GM12878 (cell line): ENCODE measurements at regions of chr3 and their contacts with region 1.

Region 1: GRCh38 chr3:195271116-195271858 is at the start of gene XXYLT1:
- DNase-seq: no peak
- ATAC-seq: peak; percentile 95
- H3K4me3 ChIP-seq: peak within 1 kb of the TSS; percentile 85
- H3K27ac ChIP-seq: peak within 1 kb of the TSS; percentile 64
- H3K4me1 ChIP-seq: peaks cover 10% of the 10 kb centered on the region; the same call in 1 of the 2 replicates
- H3K27me3 ChIP-seq: no peaks in the 10 kb centered on the region
- CTCF ChIP-seq: peak; percentile 84 to 99 (median 91); a peak in 5 of 6 replicates
- EP300 ChIP-seq: no peak
- POLR2A ChIP-seq: no peak; the same call in 1 of the 2 replicates
- RAD21 ChIP-seq: peak; percentile 82
- polyA plus RNA-seq, gene XXYLT1: 1.2 to 3.2 TPM

Region 2: GRCh38 chr3:194682694-194683310 is 588.5 kb before region 1 on chr3:
- CTCF ChIA-PET with region 1: interaction called, 30 read pairs
- POLR2A ChIA-PET with region 1: no interaction called
- RAD21 ChIA-PET with region 1: interaction called, 32 read pairs
- SMC1A ChIA-PET with region 1: interaction called, 31 read pairs
- in situ Hi-C with region 1: no loop called
- intact Hi-C with region 1: no loop called
- DNase-seq: no peak
- ATAC-seq: peak; percentile 86
- H3K4me3 ChIP-seq: no peak overlapping the region
- H3K27ac ChIP-seq: no peak overlapping the region
- H3K4me1 ChIP-seq: peaks cover 36% of the 10 kb centered on the region
- H3K27me3 ChIP-seq: peaks cover 0 to 5% of the 10 kb centered on the region in 2 experiments; a peak in 2 of 4 replicates
- CTCF ChIP-seq: peak; percentile 88 to 97 (median 94); a peak in 5 of 6 replicates
- EP300 ChIP-seq: no peak
- POLR2A ChIP-seq: no peak
- RAD21 ChIP-seq: peak; percentile 95

Region 3: GRCh38 chr3:195286115-195286872 is 15.0 kb after region 1 on chr3:
- CTCF ChIA-PET with region 1: interaction called, 18 read pairs
- POLR2A ChIA-PET with region 1: interaction called, 7 read pairs
- RAD21 ChIA-PET with region 1: interaction called, 6 read pairs
- SMC1A ChIA-PET with region 1: interaction called, 3 read pairs
- in situ Hi-C with region 1: no loop called
- intact Hi-C with region 1: no loop called
- DNase-seq: no peak
- ATAC-seq: no peak
- H3K4me3 ChIP-seq: no peak overlapping the region
- H3K27ac ChIP-seq: no peak overlapping the region
- H3K4me1 ChIP-seq: no peaks in the 10 kb centered on the region
- H3K27me3 ChIP-seq: no peaks in the 10 kb centered on the region
- CTCF ChIP-seq: no peak
- EP300 ChIP-seq: no peak
- POLR2A ChIP-seq: no peak
- RAD21 ChIP-seq: no peak

Region 4: DNA sequence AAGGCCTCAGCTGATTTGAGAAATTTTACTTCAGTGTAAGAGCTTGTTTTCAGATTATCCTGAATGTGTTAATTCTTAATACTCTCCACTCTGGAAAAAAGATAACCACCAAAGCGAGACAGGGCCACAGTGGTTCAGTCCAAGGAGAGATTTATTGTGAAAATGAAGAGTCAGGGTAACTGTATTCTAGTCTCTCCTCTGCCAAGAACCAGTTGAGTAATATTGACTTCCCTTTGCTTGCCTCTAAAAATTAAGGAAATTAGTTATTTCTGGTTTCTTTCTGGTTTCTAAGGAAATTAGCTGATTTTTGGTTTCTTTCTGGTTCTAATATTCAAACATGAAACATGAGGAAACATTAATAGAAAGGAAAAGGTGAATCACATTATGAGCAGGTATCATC is 236.9 kb after region 1 on chr3:
- CTCF ChIA-PET with region 1: interaction called, 37 read pairs
- POLR2A ChIA-PET with region 1: no interaction called
- RAD21 ChIA-PET with region 1: interaction called, 10 read pairs
- SMC1A ChIA-PET with region 1: interaction called, 9 read pairs
- in situ Hi-C with region 1: no loop called
- intact Hi-C with region 1: no loop called
- DNase-seq: no peak
- ATAC-seq: no peak
- H3K4me3 ChIP-seq: no peak overlapping the region
- H3K27ac ChIP-seq: no peak overlapping the region
- H3K4me1 ChIP-seq: no peaks in the 10 kb centered on the region
- H3K27me3 ChIP-seq: no peaks in the 10 kb centered on the region
- CTCF ChIP-seq: no peak
- EP300 ChIP-seq: no peak
- POLR2A ChIP-seq: no peak
- RAD21 ChIP-seq: no peak

Region 5: DNA sequence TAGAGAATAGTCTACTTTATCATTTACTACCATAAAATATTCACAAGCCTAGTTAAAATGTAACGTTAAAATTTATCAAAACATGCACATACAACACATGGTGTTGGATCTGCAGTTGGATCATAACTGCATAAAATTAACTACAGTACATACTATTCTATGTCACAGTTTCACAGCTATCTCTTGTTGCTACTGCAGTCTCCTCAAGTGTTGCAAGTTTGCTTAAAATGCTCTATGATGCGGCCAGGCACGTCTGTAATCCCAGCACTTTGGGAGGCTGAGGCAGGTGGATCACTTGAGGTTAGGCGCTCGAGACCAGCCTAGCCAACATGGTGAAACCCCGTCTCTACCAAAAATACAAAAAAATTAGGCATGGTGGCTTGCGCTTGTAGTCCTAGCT is 261.5 kb after region 1 on chr3:
- CTCF ChIA-PET with region 1: interaction called, 179 read pairs
- POLR2A ChIA-PET with region 1: interaction called, 5 read pairs
- RAD21 ChIA-PET with region 1: interaction called, 60 read pairs
- SMC1A ChIA-PET with region 1: interaction called, 22 read pairs
- in situ Hi-C with region 1: loop called (anchors 10 kb)
- intact Hi-C with region 1: no loop called
- DNase-seq: no peak
- ATAC-seq: peak; percentile 28
- H3K4me3 ChIP-seq: 0 out of 2 replicates have a peak overlapping the region, but pooled peaks have one; percentile 26
- H3K27ac ChIP-seq: no peak overlapping the region
- H3K4me1 ChIP-seq: peaks cover 11% of the 10 kb centered on the region
- H3K27me3 ChIP-seq: no peaks in the 10 kb centered on the region
- CTCF ChIP-seq: no peak
- EP300 ChIP-seq: no peak
- POLR2A ChIP-seq: no peak
- RAD21 ChIP-seq: no peak

Region 6: DNA sequence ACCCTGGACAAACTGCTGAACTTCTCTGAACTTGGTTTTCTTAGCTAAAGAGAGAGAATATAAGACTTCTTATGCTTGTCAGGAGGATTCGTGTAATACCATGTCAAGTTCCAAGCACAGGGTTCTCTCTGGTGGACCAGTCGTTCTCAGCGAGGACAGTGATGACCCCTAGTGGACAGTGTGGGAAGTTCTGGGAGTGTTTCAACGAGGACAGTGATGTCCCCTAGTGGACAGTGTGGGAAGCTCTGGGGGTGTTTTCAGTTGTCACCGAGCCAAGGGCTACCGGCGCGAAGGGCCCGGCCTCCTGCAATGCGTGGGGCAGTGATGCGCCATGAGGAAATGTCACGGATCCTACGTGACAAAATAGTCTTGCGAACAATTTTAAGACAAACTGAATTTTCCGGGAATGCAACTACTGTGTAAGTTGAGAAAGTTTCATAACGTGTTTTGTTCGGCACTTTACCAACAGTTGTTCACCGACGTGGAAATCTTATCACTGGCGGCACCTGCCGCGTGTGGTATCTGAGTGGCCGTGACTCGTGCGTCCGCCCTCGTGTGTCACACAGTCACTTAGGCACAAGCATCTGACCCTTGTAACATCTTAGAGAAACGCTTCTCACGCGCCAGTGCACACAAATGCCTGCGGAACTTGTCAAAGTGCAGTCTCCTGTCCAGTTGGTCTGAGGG is 579.7 kb after region 1 on chr3:
- CTCF ChIA-PET with region 1: interaction called, 5 read pairs
- POLR2A ChIA-PET with region 1: no interaction called
- RAD21 ChIA-PET with region 1: interaction called, 3 read pairs
- SMC1A ChIA-PET with region 1: interaction called, 4 read pairs
- in situ Hi-C with region 1: no loop called
- intact Hi-C with region 1: loop called (anchors 10 kb)
- DNase-seq: peak; percentile 62
- ATAC-seq: peak; percentile 97
- H3K4me3 ChIP-seq: no peak overlapping the region
- H3K27ac ChIP-seq: no peak overlapping the region
- H3K4me1 ChIP-seq: peaks cover 3% of the 10 kb centered on the region; the same call in 1 of the 2 replicates
- H3K27me3 ChIP-seq: no peaks in the 10 kb centered on the region
- CTCF ChIP-seq: peak; percentile 100; a peak in 5 of 6 replicates
- EP300 ChIP-seq: no peak
- POLR2A ChIP-seq: no peak
- RAD21 ChIP-seq: peak; percentile 100